ENCODE measurements at regions of chr9 and their contacts with region 1.

Region 1: DNA sequence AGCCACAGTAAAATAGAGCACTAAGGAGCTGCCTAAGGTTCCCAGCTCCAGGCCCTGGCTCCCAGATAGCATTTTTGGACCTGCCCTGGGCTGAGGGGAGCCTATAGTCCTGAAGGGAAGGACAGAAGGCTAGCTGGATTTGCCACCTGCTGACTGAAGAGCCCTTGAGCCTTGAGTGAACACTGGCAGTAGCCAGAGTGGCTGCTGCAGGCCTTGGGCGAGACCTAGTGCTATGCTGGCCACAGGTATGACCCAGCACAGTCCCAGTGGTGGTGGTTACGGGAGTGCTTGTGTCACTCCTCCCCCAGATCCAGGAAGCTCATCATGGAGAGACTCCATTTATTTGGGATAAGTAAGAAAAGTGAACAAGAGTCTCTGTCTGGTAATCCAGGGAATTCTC is 10.3 kb upstream of the STX17 start:
- DNase-seq: no peak
- H3K4me3 ChIP-seq: no peak overlapping the region
- H3K27ac ChIP-seq: no peak overlapping the region
- H3K4me1 ChIP-seq: no peaks in the 10 kb centered on the region
- H3K27me3 ChIP-seq: peaks cover 11% of the 10 kb centered on the region
- CTCF ChIP-seq: no peak

Region 2: DNA sequence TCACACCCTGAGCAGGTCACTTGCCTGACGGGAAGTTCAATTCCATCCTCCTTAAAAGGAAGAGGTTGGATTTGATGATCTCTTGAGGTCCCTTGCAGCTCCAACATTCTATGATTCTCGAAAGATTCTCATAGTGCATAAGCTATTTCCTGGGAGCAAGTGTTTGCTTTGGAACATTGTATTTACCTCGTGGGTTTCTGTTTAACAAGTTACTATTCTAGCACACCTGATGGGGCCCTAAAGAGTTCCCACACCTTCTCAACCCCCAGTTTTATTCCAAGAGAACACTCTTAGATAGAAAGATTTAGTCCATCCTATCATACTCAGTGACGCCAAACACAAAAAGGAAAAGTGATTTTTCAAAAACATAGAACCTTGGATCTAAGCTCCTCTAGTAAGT is 51.1 kb before region 1 on chr9:
- intact Hi-C with region 1: loop called (anchors 2 kb)
- DNase-seq: no peak
- H3K4me3 ChIP-seq: no peak overlapping the region
- H3K27ac ChIP-seq: no peak overlapping the region
- H3K4me1 ChIP-seq: no peaks in the 10 kb centered on the region
- H3K27me3 ChIP-seq: no peaks in the 10 kb centered on the region
- CTCF ChIP-seq: no peak

Measured in left ventricle myocardium inferior (tissue), 1 donor.